GM12878 (cell line): ENCODE measurements at regions of chr15 and their contacts with region 1.

Region 1: GRCh38 chr15:76642671-76643070 is 262.5 kb downstream of the SCAPER start:
- DNase-seq: no peak
- ATAC-seq: no peak
- H3K4me3 ChIP-seq: no peak overlapping the region
- H3K27ac ChIP-seq: no peak overlapping the region
- H3K4me1 ChIP-seq: no peaks in the 10 kb centered on the region
- H3K27me3 ChIP-seq: no peaks in the 10 kb centered on the region
- CTCF ChIP-seq: peak; percentile 19 to 39 (median 23); a peak in 3 of 6 replicates
- EP300 ChIP-seq: no peak
- POLR2A ChIP-seq: no peak
- RAD21 ChIP-seq: peak; percentile 36; the same call in 1 of the 2 replicates

Region 2: GRCh38 chr15:76866716-76867321 is 224.1 kb after region 1 on chr15:
- CTCF ChIA-PET with region 1: interaction called, 16 read pairs
- POLR2A ChIA-PET with region 1: no interaction called
- RAD21 ChIA-PET with region 1: interaction called, 8 read pairs
- SMC1A ChIA-PET with region 1: interaction called, 9 read pairs
- in situ Hi-C with region 1: no loop called
- intact Hi-C with region 1: no loop called
- DNase-seq: no peak
- ATAC-seq: peak; percentile 53; the same call in 2 of the 3 replicates
- H3K4me3 ChIP-seq: no peak overlapping the region
- H3K27ac ChIP-seq: no peak overlapping the region
- H3K4me1 ChIP-seq: peaks cover 5% of the 10 kb centered on the region; the same call in 1 of the 2 replicates
- H3K27me3 ChIP-seq: no peaks in the 10 kb centered on the region
- CTCF ChIP-seq: peak; percentile 43 to 51 (median 47); a peak in 5 of 6 replicates
- EP300 ChIP-seq: no peak
- POLR2A ChIP-seq: no peak
- RAD21 ChIP-seq: peak; percentile 82